ENCODE measurements at regions of chr14 and their contacts with region 1.

Region 1: DNA sequence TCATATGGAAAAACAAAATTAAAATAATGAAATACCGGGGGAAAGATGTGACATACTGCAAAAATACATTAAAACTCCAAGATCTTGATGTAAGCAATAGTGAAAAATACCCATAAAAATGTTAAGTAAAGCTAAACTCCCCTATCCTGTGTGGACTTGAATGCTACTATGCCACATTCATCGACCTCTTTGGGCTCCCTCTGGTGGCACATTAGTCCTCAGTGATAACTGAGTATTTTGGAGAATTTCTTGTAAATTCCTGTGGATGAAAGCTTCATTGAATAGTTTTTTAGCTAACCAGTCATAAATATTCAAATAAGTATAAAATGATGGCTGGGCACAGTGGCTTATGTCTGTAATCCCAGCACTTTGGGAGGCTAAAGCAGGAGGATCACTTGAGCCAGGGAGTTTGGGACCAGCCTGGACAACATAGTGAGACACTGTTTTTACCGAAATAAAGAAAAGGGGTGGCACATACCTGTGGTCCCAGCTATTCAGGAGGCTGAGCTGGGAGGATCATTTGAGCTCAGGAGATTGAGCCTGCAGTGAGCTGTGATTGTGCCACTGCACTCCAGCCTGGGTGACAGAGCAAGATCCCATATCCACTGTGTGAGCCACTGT is 42.4 kb upstream of the SGPP1 start:
- DNase-seq: peak; percentile 36
- ATAC-seq: peak; percentile 93
- H3K4me3 ChIP-seq: no peak overlapping the region
- H3K27ac ChIP-seq: no peak overlapping the region
- H3K4me1 ChIP-seq: peaks cover 2 to 6% of the 10 kb centered on the region in 2 experiments; a peak in 3 of 4 replicates
- H3K27me3 ChIP-seq: no peaks in the 10 kb centered on the region
- CTCF ChIP-seq: peak; percentile 60 to 78 (median 65); a peak in 5 of 6 replicates
- POLR2A ChIP-seq: no peak
- RAD21 ChIP-seq: peak; percentile 78

Region 2: DNA sequence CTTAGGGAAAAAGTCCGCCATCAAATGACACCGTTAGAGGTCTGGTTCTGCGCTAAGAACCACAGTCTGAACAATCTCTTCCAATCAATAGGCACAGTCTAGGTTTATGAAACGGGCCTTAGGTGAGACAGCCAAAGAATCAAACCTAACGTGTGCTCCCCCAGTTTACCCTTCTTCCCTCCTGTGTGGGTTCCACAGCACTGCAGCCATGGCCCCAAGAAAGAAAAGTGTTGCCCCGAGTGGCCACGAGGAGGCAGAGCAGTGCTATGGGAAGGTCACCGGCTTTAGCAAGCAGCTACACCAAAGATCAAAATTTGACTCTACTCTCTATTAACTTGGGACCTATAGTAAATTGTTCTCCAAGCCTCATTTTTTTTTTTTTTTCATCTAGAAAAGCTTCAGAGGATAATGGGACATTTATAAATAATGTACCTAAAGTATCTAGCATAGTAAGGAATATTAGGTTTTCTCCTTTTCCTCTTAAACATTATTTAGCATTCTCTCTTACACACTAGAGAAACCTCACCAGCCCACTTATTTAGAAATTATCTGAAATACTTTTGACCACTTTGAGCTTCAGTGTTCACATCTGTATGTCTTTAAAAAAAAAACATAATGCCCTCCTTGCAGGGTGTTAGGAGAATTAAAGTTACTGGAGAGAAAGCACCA is 381.4 kb before region 1 on chr14:
- CTCF ChIA-PET with region 1: interaction called, 32 read pairs
- POLR2A ChIA-PET with region 1: no interaction called
- RAD21 ChIA-PET with region 1: interaction called, 4 to 5 read pairs
- intact Hi-C with region 1: loop called (anchors 1 kb)
- DNase-seq: peak; percentile 21
- ATAC-seq: peak; percentile 97
- H3K4me3 ChIP-seq: no peak overlapping the region
- H3K27ac ChIP-seq: no peak overlapping the region
- H3K4me1 ChIP-seq: no peaks in the 10 kb centered on the region
- H3K27me3 ChIP-seq: no peaks in the 10 kb centered on the region
- CTCF ChIP-seq: peak; percentile 64 to 90 (median 86); a peak in 5 of 6 replicates
- POLR2A ChIP-seq: no peak
- RAD21 ChIP-seq: peak; percentile 86

Region 3: DNA sequence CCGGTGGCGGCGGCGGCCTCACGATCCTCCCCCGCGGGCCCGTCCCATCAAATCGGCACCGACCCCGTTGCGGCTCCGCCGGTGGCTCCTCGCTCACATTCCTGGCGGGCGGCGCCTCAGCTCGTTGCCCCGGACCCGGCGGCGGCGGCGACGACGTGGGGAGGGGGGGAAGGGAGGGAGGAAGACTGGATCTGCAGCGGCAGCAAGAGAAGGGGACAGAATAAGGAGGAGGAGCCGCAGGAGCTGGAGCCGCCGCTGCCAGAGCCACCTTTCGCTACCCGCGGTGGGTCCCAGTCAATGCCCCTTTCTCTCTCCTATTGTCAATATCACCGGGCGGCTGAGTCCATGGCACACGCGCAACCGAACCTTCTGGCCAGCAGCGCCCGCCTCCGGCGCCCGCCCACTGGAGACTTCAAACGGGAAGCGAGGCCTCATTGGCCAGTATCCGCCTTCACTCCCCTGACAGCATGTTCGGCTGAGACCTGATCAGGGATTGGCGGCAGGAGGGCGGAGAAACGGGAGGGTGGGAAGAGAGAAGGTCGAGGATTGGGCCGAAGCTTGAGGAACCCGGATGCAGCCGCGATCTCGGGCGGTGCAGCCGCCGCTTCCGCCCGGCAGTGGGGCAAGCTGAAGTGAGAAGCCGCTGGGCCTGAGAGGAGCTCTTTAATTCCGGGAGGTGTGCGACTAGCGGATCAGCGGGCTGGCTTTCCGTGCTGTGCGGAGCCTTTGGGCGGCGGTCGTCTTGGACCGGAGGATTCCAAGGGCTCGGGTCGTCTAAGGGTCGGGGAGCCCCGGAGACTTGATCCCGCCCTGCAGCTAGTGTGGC is 227.1 kb before region 1 on chr14 and contains the start of gene PPP2R5E:
- CTCF ChIA-PET with region 1: interaction called, 6 read pairs
- POLR2A ChIA-PET with region 1: interaction called, 3 read pairs
- RAD21 ChIA-PET with region 1: interaction called in 1 of 2 experiments, 3 read pairs
- intact Hi-C with region 1: loop called (anchors 10 kb)
- DNase-seq: peak; percentile 98
- ATAC-seq: peak; percentile 95
- H3K4me3 ChIP-seq: peak within 1 kb of the TSS; percentile 96 to 97
- H3K27ac ChIP-seq: peak within 1 kb of the TSS; percentile 91
- H3K4me1 ChIP-seq: peaks cover 4 to 22% of the 10 kb centered on the region in 2 experiments; a peak in 3 of 4 replicates
- H3K27me3 ChIP-seq: no peaks in the 10 kb centered on the region
- CTCF ChIP-seq: no peak
- POLR2A ChIP-seq: peak; percentile 68
- RAD21 ChIP-seq: no peak
- total RNA-seq, gene PPP2R5E: 45.0 TPM

Region 4: GRCh38 chr14:63632932-63633514 is 137.3 kb before region 1 on chr14:
- CTCF ChIA-PET with region 1: interaction called, 14 read pairs
- POLR2A ChIA-PET with region 1: no interaction called
- RAD21 ChIA-PET with region 1: no interaction called
- intact Hi-C with region 1: loop called (anchors 2 kb)
- DNase-seq: peak; percentile 7
- ATAC-seq: peak; percentile 70
- H3K4me3 ChIP-seq: no peak overlapping the region
- H3K27ac ChIP-seq: no peak overlapping the region
- H3K4me1 ChIP-seq: no peaks in the 10 kb centered on the region
- H3K27me3 ChIP-seq: no peaks in the 10 kb centered on the region
- CTCF ChIP-seq: peak; percentile 45 to 66 (median 59); a peak in 5 of 6 replicates
- POLR2A ChIP-seq: no peak
- RAD21 ChIP-seq: peak; percentile 44

Region 5: GRCh38 chr14:63641473-63642228 is 128.6 kb before region 1 on chr14 and contains the start of gene WDR89:
- CTCF ChIA-PET with region 1: interaction called, 13 read pairs
- POLR2A ChIA-PET with region 1: interaction called, 5 read pairs
- RAD21 ChIA-PET with region 1: interaction called in 1 of 2 experiments, 3 read pairs
- intact Hi-C with region 1: loop called (anchors 1 kb)
- DNase-seq: peak; percentile 98
- ATAC-seq: peak; percentile 91
- H3K4me3 ChIP-seq: peak within 1 kb of the TSS; percentile 75 to 86
- H3K27ac ChIP-seq: peak within 1 kb of the TSS; percentile 92
- H3K4me1 ChIP-seq: peaks cover 0 to 17% of the 10 kb centered on the region in 2 experiments; a peak in 2 of 4 replicates
- H3K27me3 ChIP-seq: no peaks in the 10 kb centered on the region
- CTCF ChIP-seq: peak; percentile 17 to 80 (median 76); a peak in 4 of 6 replicates
- POLR2A ChIP-seq: no peak
- RAD21 ChIP-seq: peak; percentile 44
- total RNA-seq, gene WDR89: 22.8 TPM

Region 6: GRCh38 chr14:63713058-63713457 is 57.2 kb before region 1 on chr14:
- CTCF ChIA-PET with region 1: no interaction called
- POLR2A ChIA-PET with region 1: no interaction called
- RAD21 ChIA-PET with region 1: no interaction called
- intact Hi-C with region 1: no loop called
- DNase-seq: no peak
- ATAC-seq: no peak
- H3K4me3 ChIP-seq: no peak overlapping the region
- H3K27ac ChIP-seq: no peak overlapping the region
- H3K4me1 ChIP-seq: peaks cover 3 to 13% of the 10 kb centered on the region in 2 experiments; a peak in 2 of 4 replicates
- H3K27me3 ChIP-seq: no peaks in the 10 kb centered on the region
- CTCF ChIP-seq: no peak
- POLR2A ChIP-seq: no peak
- RAD21 ChIP-seq: no peak

Measured in HCT116 (cell line).